Activated CD4-positive, alpha-beta T cell treated with anti-CD3 and anti-CD28 coated beads for 36 hours (primary cell): ENCODE measurements at regions of chr1 and their contacts with region 1.

Region 1: DNA sequence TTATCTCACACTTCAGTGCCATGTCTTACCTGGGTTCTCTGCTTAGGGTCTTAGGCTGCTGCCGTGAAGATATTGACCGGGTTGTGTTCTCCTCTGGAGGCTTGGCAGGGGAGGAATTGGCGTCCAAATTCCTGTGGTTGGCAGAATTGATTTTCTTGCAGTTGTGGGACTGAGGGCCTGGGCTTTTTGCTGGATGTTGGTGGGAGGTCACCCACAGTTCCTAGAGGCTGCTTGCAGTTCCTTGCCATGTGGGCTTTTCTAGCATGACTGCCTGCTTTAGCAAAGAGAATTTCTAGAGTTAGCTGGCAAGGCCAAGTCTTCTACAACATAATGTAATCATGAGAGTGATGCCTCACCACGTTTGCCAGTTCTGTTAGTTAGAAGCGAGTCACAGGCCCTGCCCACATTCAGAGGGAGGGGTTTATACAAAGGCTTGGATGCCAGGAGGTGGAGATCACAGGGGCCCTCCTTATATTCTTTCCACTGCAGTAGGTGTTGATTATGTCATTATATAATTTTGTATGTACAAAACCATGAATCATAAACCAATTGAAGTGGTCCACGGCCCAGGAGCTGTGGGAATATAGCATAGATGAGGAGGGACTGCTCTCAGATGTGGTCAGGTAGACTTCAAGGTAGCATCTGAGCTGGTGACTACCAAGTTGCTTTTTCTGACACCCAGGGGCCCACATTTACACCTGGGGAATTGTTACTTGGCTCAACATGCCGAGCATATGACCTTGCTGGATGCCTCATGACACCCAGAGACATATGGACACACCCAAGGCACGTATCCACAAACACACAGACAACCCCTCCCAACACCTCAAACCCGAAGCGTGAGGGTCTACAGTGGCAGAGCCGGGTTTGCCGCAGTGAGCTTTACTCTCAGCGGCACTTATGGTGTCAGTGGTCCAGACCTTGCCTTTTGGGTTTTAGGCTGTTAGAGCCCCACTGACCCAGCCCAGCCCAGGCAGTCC is 6.7 kb downstream of the UBL4B start:
- DNase-seq: peak; percentile 68
- ATAC-seq: peak; percentile 95
- H3K4me3 Mint-ChIP-seq: no peak overlapping the region
- H3K27ac Mint-ChIP-seq: no peak overlapping the region
- H3K4me1 Mint-ChIP-seq: peaks cover 5% of the 10 kb centered on the region
- H3K27me3 Mint-ChIP-seq: peaks cover 13% of the 10 kb centered on the region

Region 2: GRCh38 chr1:109370712-109371455 is 748.0 kb before region 1 on chr1:
- CTCF ChIA-PET with region 1: no interaction called
- POLR2A ChIA-PET with region 1: no interaction called
- intact Hi-C with region 1: no loop called
- DNase-seq: no peak
- ATAC-seq: peak; percentile 24
- H3K4me3 Mint-ChIP-seq: no peak overlapping the region
- H3K27ac Mint-ChIP-seq: peak overlapping the region; percentile 1
- H3K4me1 Mint-ChIP-seq: peaks cover 20% of the 10 kb centered on the region
- H3K27me3 Mint-ChIP-seq: peaks cover 15% of the 10 kb centered on the region

Region 3: DNA sequence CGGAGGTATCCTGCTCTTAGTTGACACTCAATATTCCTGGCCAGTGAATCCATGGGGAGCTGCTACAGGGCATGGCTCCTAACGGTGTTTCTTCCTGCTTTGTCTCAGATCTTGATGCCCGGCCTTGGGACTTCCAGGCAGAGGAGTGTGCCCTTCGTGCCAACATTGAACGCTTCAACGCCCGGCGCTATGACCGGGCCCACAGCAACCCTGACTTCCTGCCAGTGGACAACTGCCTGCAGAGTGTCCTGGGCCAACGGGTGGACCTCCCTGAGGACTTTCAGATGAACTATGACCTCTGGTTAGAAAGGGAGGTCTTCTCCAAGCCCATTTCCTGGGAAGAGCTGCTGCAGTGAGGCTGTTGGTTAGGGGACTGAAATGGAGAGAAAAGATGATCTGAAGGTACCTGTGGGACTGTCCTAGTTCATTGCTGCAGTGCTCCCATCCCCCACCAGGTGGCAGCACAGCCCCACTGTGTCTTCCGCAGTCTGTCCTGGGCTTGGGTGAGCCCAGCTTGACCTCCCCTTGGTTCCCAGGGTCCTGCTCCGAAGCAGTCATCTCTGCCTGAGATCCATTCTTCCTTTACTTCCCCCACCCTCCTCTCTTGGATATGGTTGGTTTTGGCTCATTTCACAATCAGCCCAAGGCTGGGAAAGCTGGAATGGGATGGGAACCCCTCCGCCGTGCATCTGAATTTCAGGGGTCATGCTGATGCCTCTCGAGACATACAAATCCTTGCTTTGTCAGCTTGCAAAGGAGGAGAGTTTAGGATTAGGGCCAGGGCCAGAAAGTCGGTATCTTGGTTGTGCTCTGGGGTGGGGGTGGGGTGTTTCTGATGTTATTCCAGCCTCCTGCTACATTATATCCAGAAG is 65.1 kb before region 1 on chr1:
- CTCF ChIA-PET with region 1: interaction called, 40 read pairs
- POLR2A ChIA-PET with region 1: no interaction called
- intact Hi-C with region 1: loop called (anchors 1 to 2 kb)
- DNase-seq: peak; percentile 83
- ATAC-seq: peak; percentile 88
- H3K4me3 Mint-ChIP-seq: no peak overlapping the region
- H3K27ac Mint-ChIP-seq: no peak overlapping the region
- H3K4me1 Mint-ChIP-seq: no peaks in the 10 kb centered on the region
- H3K27me3 Mint-ChIP-seq: no peaks in the 10 kb centered on the region

Region 4: DNA sequence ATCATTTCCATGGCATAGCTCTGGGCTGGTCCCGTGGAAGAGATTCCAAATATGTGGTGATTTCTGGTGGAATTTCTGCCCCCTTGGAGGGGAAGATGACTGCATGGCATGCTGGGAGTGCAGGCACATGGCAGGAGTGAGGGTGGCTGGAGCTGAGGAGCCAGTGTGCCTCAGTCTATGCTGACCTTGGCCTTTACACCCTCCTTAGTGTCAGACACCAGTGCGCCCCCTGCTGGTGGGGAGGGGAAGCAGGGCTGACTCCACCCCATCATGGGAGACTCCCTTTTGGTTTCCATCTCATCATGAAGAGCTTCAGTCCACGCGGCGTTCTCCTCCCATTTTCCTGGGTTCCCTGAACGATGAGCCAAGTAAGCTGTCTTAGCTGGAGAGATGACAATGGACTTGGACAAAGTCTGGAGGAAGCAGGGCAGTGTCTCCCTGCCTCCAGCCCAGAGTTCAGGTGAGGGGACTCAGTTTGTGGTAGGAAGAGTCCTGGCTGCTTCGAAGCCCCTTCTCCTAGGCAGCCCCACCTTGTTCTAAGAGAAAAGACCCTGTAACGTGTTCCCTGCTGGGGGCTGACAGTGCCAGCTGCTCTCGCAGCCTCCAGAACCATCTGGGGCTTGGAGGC is 58.8 kb before region 1 on chr1:
- CTCF ChIA-PET with region 1: interaction called, 40 read pairs
- POLR2A ChIA-PET with region 1: no interaction called
- intact Hi-C with region 1: no loop called
- DNase-seq: peak; percentile 89
- ATAC-seq: peak; percentile 94
- H3K4me3 Mint-ChIP-seq: no peak overlapping the region
- H3K27ac Mint-ChIP-seq: no peak overlapping the region
- H3K4me1 Mint-ChIP-seq: no peaks in the 10 kb centered on the region
- H3K27me3 Mint-ChIP-seq: no peaks in the 10 kb centered on the region

Region 5: GRCh38 chr1:110106013-110106941 is 12.6 kb before region 1 on chr1:
- CTCF ChIA-PET with region 1: interaction called, 23 read pairs
- POLR2A ChIA-PET with region 1: interaction called, 4 read pairs
- intact Hi-C with region 1: no loop called
- DNase-seq: peak; percentile 78
- ATAC-seq: peak; percentile 98
- H3K4me3 Mint-ChIP-seq: no peak overlapping the region
- H3K27ac Mint-ChIP-seq: no peak overlapping the region
- H3K4me1 Mint-ChIP-seq: no peaks in the 10 kb centered on the region
- H3K27me3 Mint-ChIP-seq: peaks cover 6% of the 10 kb centered on the region

Region 6: GRCh38 chr1:110243574-110243973 is 124.6 kb after region 1 on chr1:
- CTCF ChIA-PET with region 1: no interaction called
- POLR2A ChIA-PET with region 1: no interaction called
- intact Hi-C with region 1: no loop called
- DNase-seq: peak; percentile 66
- ATAC-seq: peak; percentile 78
- H3K4me3 Mint-ChIP-seq: no peak overlapping the region
- H3K27ac Mint-ChIP-seq: peak overlapping the region; percentile 4
- H3K4me1 Mint-ChIP-seq: peaks cover 24% of the 10 kb centered on the region
- H3K27me3 Mint-ChIP-seq: no peaks in the 10 kb centered on the region